Calu3 (cell line): ENCODE measurements at regions of chr7 and their contacts with region 1.

Region 1: GRCh38 chr7:144437370-144438191 is 34.1 kb upstream of the NOBOX start:
- DNase-seq: peak; percentile 76
- H3K4me3 Mint-ChIP-seq: no peak overlapping the region
- H3K27ac Mint-ChIP-seq: no peak overlapping the region
- H3K4me1 Mint-ChIP-seq: no peaks in the 10 kb centered on the region
- H3K27me3 Mint-ChIP-seq: no peaks in the 10 kb centered on the region
- CTCF ChIP-seq: peak; percentile 64

Region 2: DNA sequence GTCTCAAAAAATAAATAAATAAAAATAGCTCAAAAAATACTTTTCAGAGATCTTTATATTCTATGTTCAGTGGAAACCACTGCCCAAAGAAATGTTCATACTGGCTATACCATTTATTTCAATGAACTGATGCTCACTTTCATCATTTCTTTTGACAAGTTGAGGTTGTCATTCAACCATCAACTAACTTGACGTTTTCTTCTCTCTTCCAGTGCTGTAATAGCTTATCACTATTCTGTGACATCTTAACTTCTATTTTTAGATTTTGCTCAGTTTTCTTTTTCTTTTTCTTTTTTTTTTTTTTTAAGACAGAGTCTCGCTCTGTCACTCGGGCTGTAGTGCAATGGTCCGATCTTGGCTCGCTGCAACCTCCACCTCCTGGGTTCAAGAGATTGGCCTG is 263.0 kb before region 1 on chr7:
- CTCF ChIA-PET with region 1: no interaction called
- intact Hi-C with region 1: loop called (anchors 5 kb)
- DNase-seq: no peak
- H3K4me3 Mint-ChIP-seq: no peak overlapping the region
- H3K27ac Mint-ChIP-seq: no peak overlapping the region
- H3K4me1 Mint-ChIP-seq: no peaks in the 10 kb centered on the region
- H3K27me3 Mint-ChIP-seq: no peaks in the 10 kb centered on the region
- CTCF ChIP-seq: no peak

Region 3: DNA sequence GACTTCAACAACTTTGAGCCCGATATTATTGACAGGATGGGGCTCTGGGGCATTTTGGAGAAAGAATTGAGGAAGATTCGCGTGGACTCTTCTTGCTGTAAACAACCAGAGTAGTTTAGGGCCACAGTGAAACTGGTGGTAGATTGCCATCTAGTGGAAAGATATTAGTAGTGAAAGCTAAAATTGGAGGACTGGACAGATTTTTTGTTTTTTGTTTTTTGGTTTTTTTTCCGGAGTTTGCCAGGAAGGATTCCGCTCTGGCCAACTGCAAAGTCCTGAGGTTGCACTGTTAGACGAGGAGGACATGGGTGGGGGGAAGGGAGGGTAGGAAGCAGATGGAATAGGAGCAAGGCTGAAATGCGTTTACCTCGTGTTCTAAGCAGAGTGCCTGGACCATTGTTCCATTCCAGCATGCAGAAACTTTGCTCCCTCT is 45.7 kb before region 1 on chr7:
- CTCF ChIA-PET with region 1: interaction called, 3 read pairs
- intact Hi-C with region 1: loop called (anchors 2 kb)
- DNase-seq: no peak
- H3K4me3 Mint-ChIP-seq: no peak overlapping the region
- H3K27ac Mint-ChIP-seq: no peak overlapping the region
- H3K4me1 Mint-ChIP-seq: peaks cover 33% of the 10 kb centered on the region
- H3K27me3 Mint-ChIP-seq: peaks cover 21% of the 10 kb centered on the region
- CTCF ChIP-seq: peak; percentile 47

Region 4: DNA sequence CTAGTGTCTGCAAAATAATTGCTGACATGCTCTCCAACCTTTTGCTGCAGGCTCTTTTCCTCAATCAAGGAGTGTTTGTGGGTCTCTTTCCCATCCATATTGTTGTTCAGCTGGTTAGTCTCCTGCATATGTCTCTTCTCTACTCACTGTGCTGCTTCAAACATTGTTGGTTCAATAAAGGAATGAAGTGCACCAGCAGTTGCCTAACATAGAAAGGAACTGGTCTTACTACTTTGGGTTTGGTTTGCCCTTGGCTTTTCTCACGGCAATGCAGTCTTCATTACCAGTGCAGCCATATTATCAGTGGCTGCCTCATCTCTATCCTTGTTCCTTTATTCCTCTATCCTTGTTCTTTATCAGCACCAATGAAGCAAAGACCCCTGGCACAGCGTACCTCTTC is 568.0 kb after region 1 on chr7:
- CTCF ChIA-PET with region 1: no interaction called
- intact Hi-C with region 1: no loop called
- DNase-seq: no peak
- H3K4me3 Mint-ChIP-seq: no peak overlapping the region
- H3K27ac Mint-ChIP-seq: no peak overlapping the region
- H3K4me1 Mint-ChIP-seq: no peaks in the 10 kb centered on the region
- H3K27me3 Mint-ChIP-seq: no peaks in the 10 kb centered on the region
- CTCF ChIP-seq: no peak

Region 5: GRCh38 chr7:145123502-145123901 is 685.9 kb after region 1 on chr7:
- CTCF ChIA-PET with region 1: no interaction called
- intact Hi-C with region 1: no loop called
- DNase-seq: no peak
- H3K4me3 Mint-ChIP-seq: no peak overlapping the region
- H3K27ac Mint-ChIP-seq: no peak overlapping the region
- H3K4me1 Mint-ChIP-seq: no peaks in the 10 kb centered on the region
- H3K27me3 Mint-ChIP-seq: no peaks in the 10 kb centered on the region
- CTCF ChIP-seq: no peak